ENCODE measurements at regions of chr7 and their contacts with region 1.

Region 1: GRCh38 chr7:148262721-148263229 is 327.8 kb upstream of the C7orf33 start:
- DNase-seq: peak; percentile 75
- ATAC-seq: peak; percentile 72
- H3K4me3 Mint-ChIP-seq: no peak overlapping the region
- H3K27ac Mint-ChIP-seq: no peak overlapping the region
- H3K4me1 Mint-ChIP-seq: peaks cover 7% of the 10 kb centered on the region
- H3K27me3 Mint-ChIP-seq: peaks cover 11% of the 10 kb centered on the region
- CTCF ChIP-seq: peak; percentile 90

Region 2: GRCh38 chr7:148276314-148277041 is 13.7 kb after region 1 on chr7:
- CTCF ChIA-PET with region 1: interaction called, 17 read pairs
- POLR2A ChIA-PET with region 1: no interaction called
- intact Hi-C with region 1: no loop called
- DNase-seq: no peak
- ATAC-seq: no peak
- H3K4me3 Mint-ChIP-seq: no peak overlapping the region
- H3K27ac Mint-ChIP-seq: no peak overlapping the region
- H3K4me1 Mint-ChIP-seq: no peaks in the 10 kb centered on the region
- H3K27me3 Mint-ChIP-seq: peaks cover 10% of the 10 kb centered on the region
- CTCF ChIP-seq: no peak

Region 3: GRCh38 chr7:148282297-148282696 is 19.5 kb after region 1 on chr7:
- CTCF ChIA-PET with region 1: interaction called, 17 read pairs
- POLR2A ChIA-PET with region 1: no interaction called
- intact Hi-C with region 1: no loop called
- DNase-seq: no peak
- ATAC-seq: no peak
- H3K4me3 Mint-ChIP-seq: no peak overlapping the region
- H3K27ac Mint-ChIP-seq: no peak overlapping the region
- H3K4me1 Mint-ChIP-seq: no peaks in the 10 kb centered on the region
- H3K27me3 Mint-ChIP-seq: peaks cover 6% of the 10 kb centered on the region
- CTCF ChIP-seq: no peak

Region 4: GRCh38 chr7:148327383-148327782 is 64.6 kb after region 1 on chr7:
- CTCF ChIA-PET with region 1: no interaction called
- POLR2A ChIA-PET with region 1: no interaction called
- intact Hi-C with region 1: no loop called
- DNase-seq: no peak
- ATAC-seq: no peak
- H3K4me3 Mint-ChIP-seq: no peak overlapping the region
- H3K27ac Mint-ChIP-seq: no peak overlapping the region
- H3K4me1 Mint-ChIP-seq: no peaks in the 10 kb centered on the region
- H3K27me3 Mint-ChIP-seq: peaks cover 9% of the 10 kb centered on the region
- CTCF ChIP-seq: no peak